Activated naive CD8-positive, alpha-beta T cell treated with anti-CD3 and anti-CD28 coated beads, Interleukin-2, amount 10 ng/mL, durations not matched to agents 7 days and 5 days (primary cell): ENCODE measurements at regions of chr12 and their contacts with region 1.

Region 1: DNA sequence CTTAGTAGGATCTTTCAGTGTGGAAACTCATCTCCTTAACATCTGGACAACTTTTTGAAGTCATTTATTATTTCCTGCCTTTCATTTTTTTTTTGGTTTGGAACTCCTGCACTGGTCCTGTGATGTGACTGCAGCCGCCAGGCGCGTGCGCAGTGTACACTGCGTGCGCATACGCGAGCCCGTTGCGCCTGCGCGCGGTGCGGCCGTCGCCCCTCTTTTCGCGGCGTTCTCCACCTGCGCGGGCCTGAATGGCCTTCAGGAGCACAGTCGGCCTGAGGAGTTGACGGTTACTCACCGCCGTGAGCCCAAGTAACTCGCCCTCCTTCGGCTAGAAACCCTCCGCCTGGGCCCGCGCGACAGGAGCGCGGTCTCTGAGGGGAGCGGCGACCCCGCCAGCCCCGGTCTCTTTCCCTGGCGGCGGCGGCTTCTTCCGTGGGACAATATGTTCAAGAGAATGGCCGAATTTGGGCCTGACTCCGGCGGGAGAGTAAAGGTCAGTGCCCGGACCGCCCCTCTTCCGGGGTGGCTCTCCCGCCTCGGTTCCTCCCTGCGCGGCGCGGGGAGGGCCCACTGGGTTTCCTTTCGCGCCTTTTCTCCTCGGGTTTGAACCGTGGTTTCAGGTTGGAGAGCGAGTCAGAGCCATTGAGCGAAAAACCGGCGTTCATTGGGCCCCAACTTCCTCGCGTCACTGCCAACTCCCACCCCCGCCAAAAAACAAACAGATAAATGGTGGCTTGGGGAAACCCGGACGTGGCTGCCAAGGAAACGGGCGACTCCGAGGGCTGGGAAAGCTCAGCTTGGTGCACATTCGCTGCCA is at the start of gene YEATS4:
- DNase-seq: peak; percentile 89
- ATAC-seq: peak; percentile 88
- H3K4me3 Mint-ChIP-seq: peak within 1 kb of the TSS; percentile 85
- H3K27ac Mint-ChIP-seq: peak within 1 kb of the TSS; percentile 94
- H3K4me1 Mint-ChIP-seq: peaks cover 20% of the 10 kb centered on the region
- H3K27me3 Mint-ChIP-seq: no peaks in the 10 kb centered on the region
- total RNA-seq, gene YEATS4: 32.8 to 42.6 TPM

Region 2: GRCh38 chr12:69330475-69331473 is 29.0 kb before region 1 on chr12:
- POLR2A ChIA-PET with region 1: interaction called, 15 read pairs
- DNase-seq: peak; percentile 70
- ATAC-seq: peak; percentile 79
- H3K4me3 Mint-ChIP-seq: peak overlapping the region; percentile 87
- H3K27ac Mint-ChIP-seq: peak overlapping the region; percentile 96
- H3K4me1 Mint-ChIP-seq: peaks cover 34% of the 10 kb centered on the region
- H3K27me3 Mint-ChIP-seq: peaks cover 1% of the 10 kb centered on the region